Left lung (tissue), 14 donors: ENCODE measurements at regions of chr2 and their contacts with region 1.

Region 1: DNA sequence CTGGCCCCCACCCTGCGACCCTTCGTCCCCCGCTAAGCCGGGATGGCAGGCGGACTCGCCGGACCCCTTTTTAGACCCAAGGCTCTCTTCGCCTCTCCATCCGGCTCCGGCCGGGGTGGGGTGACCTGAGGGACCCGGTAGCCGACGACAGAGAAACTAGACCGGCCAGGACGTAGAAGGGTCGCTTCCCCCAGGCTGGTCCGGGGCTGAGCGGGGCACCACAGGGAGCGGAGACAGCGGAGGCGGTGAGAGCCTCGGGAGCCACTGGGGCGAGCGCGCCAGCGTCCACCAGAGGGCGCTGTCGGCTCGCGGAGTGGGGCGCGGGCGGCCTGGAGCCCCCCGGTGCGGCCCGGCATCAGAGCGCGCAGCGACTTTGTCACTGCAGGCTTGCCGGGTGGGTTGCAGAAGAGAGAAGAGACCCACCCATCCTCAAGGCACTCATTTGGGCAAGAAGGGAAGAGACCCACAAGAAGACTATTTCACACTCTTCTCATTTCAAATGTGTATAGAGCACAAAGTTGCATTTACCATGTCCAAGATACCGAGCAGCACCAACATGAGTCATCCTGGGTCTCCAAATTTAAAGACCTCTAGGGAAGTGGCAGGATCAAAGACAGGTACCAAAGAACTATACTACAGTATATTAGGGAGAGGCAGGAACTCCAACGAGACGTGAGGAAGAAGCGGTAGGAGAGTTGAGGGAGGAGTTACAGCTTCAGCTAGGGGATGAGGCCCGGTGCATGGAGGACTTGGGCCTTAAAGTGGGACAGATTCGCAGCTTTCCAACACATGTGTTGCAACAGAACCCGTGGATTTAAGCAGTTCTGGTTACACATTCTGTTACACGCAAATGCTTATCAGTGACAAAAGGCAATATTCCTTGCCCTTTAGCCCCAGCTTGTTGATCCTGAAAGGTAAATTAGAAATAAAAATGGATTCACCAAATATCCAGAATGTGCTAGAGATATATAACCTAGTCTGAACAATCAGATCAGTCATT is 7.6 kb upstream of the PRKCE start:
- DNase-seq: peak; percentile 72 to 97 (median 79)
- ATAC-seq: peak; percentile 100
- H3K4me3 ChIP-seq: peak overlapping the region; percentile 47 to 49
- H3K27ac ChIP-seq: peak overlapping the region in 1 of 2 donors; percentile 43
- H3K4me1 ChIP-seq: peaks cover 0 to 20% of the 10 kb centered on the region in 2 donors
- H3K27me3 ChIP-seq: peaks cover 0 to 14% of the 10 kb centered on the region in 2 donors
- CTCF ChIP-seq: peak; percentile 98 to 100

Region 2: DNA sequence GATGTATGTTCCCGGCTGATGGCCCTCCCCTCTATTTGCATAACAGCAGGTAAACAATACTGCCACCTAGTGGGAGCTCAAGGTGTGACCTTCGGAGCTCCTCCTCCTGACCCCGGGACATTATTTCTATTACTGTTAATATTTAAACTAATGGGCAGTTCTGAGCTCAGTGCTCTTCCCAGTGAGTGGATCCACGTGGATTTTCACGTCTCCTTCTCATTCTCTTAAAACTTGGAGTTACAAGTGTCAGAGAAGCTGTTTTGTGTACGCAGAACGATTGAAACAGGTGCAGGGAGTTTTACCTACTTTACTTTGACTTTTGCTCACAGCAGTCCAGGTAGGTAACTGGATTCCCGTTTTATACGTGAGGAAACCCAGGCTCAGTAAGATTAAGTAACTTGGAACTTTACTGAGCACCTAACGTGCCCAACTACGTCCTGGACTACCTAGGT is 134.9 kb after region 1 on chr2:
- intact Hi-C with region 1: loop called in 1 of 2 experiments (anchors 5 kb)
- DNase-seq: peak in 1 of 4 donors; percentile 67
- ATAC-seq: peak; percentile 90
- H3K4me3 ChIP-seq: no peak overlapping the region
- H3K27ac ChIP-seq: no peak overlapping the region
- H3K4me1 ChIP-seq: peaks cover 0 to 38% of the 10 kb centered on the region in 2 donors
- H3K27me3 ChIP-seq: no peaks in the 10 kb centered on the region
- CTCF ChIP-seq: peak; percentile 68 to 84

Region 3: GRCh38 chr2:45935791-45936622 is 292.2 kb after region 1 on chr2:
- intact Hi-C with region 1: loop called (anchors 5 to 10 kb)
- DNase-seq: peak; percentile 76 to 94 (median 90)
- ATAC-seq: peak; percentile 92
- H3K4me3 ChIP-seq: no peak overlapping the region
- H3K27ac ChIP-seq: peak overlapping the region; percentile 22 to 53
- H3K4me1 ChIP-seq: peaks cover 15 to 33% of the 10 kb centered on the region in 2 donors
- H3K27me3 ChIP-seq: no peaks in the 10 kb centered on the region
- CTCF ChIP-seq: peak; percentile 60 to 71